ENCODE measurements at regions of chr3 and their contacts with region 1.

Region 1: GRCh38 chr3:136305878-136306277 is 55.7 kb downstream of the PCCB start:
- DNase-seq: peak; percentile 28
- H3K4me3 ChIP-seq: no peak overlapping the region
- CTCF ChIP-seq: peak; percentile 57

Region 2: DNA sequence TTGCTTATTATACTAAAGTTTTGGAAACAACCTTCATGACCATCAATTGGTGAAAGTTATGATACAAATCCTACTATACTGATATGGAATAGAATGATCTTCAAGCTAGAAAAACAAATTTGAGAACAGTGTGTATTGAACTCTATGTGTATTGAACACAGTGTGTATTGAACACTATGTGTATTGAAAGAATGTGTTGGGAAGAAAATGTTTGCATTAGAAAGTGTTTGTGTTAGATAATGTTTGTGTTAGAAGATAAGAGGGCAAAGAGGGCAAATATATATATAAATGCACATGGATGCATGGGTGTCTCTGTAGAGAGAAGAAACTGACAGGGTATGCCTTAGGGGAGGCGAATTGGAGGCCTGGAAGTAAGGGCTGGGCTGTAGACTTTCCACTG is 13.4 kb before region 1 on chr3:
- CTCF ChIA-PET with region 1: interaction called, 10 read pairs
- POLR2A ChIA-PET with region 1: no interaction called
- DNase-seq: no peak
- H3K4me3 ChIP-seq: no peak overlapping the region
- CTCF ChIP-seq: no peak